ENCODE measurements at regions of chr13 and their contacts with region 1.

Region 1: GRCh38 chr13:62747629-62748028 is 1332.0 kb upstream of the PCDH20 start:
- DNase-seq: no peak
- ATAC-seq: no peak
- H3K4me3 ChIP-seq: no peak overlapping the region
- H3K27ac ChIP-seq: no peak overlapping the region
- H3K4me1 ChIP-seq: no peaks in the 10 kb centered on the region
- H3K27me3 ChIP-seq: no peaks in the 10 kb centered on the region
- CTCF ChIP-seq: no peak

Region 2: GRCh38 chr13:62687727-62688126 is 59.9 kb before region 1 on chr13:
- intact Hi-C with region 1: no loop called
- DNase-seq: no peak
- ATAC-seq: no peak
- H3K4me3 ChIP-seq: no peak overlapping the region
- H3K27ac ChIP-seq: no peak overlapping the region
- H3K4me1 ChIP-seq: no peaks in the 10 kb centered on the region
- H3K27me3 ChIP-seq: no peaks in the 10 kb centered on the region
- CTCF ChIP-seq: no peak

Region 3: DNA sequence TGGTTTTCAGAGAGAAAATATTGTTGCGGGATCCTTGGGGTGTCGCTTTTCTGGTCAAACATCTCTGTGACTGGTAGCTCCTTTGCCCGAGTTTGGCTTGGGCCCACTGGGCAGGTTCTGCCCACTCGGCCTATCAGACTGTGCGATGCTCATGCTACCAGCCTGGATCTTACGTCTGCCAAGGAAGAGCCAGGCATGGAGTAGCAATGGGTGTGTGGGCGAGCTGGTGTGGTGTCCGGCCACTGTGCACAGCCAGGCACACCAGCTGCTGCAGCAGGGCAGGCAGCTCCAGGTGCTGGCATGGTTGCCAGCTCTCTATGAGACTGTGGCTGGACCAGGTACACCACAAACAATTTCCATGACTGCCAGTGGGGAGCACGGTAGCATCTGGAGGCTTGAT is 19.8 kb after region 1 on chr13:
- intact Hi-C with region 1: loop called in 1 of 2 experiments (anchors 2 kb)
- DNase-seq: no peak
- ATAC-seq: no peak
- H3K4me3 ChIP-seq: no peak overlapping the region
- H3K27ac ChIP-seq: no peak overlapping the region
- H3K4me1 ChIP-seq: no peaks in the 10 kb centered on the region
- H3K27me3 ChIP-seq: no peaks in the 10 kb centered on the region
- CTCF ChIP-seq: no peak

Measured in psoas muscle (tissue), 8 donors.